ENCODE measurements at regions of chr13 and their contacts with region 1.

Region 1: DNA sequence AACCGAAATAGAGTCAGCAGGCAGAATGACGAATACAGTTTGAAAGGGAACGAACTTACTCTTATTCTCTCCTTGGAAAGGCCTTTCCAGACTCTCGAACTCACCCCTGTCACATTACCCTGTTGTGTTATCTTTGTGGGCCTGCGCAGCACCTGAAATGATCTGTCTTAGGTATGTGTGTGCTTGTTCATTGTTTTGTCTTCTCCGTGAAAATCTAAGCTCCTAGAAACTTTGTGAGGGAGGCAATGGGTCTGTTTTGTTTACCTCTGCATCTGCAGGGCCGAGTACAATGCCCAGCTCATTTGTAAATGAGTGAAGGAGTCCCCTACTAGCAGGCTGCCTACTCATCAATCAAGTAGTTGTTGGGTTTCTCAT is 19.6 kb downstream of the HMGB1 start:
- DNase-seq: no peak
- H3K4me3 ChIP-seq: peak overlapping the region; percentile 43
- H3K27ac ChIP-seq: peak overlapping the region in 1 of 2 donors; percentile 67
- H3K4me1 ChIP-seq: no peaks in the 10 kb centered on the region
- H3K27me3 ChIP-seq: no peaks in the 10 kb centered on the region
- CTCF ChIP-seq: no peak
- EP300 ChIP-seq: no peak
- POLR2A ChIP-seq: no peak

Region 2: GRCh38 chr13:28611654-28612131 is 1834.4 kb before region 1 on chr13:
- intact Hi-C with region 1: no loop called
- DNase-seq: no peak
- H3K4me3 ChIP-seq: no peak overlapping the region
- H3K27ac ChIP-seq: no peak overlapping the region
- H3K4me1 ChIP-seq: no peaks in the 10 kb centered on the region
- H3K27me3 ChIP-seq: no peaks in the 10 kb centered on the region
- CTCF ChIP-seq: no peak
- EP300 ChIP-seq: no peak
- POLR2A ChIP-seq: no peak

Region 3: DNA sequence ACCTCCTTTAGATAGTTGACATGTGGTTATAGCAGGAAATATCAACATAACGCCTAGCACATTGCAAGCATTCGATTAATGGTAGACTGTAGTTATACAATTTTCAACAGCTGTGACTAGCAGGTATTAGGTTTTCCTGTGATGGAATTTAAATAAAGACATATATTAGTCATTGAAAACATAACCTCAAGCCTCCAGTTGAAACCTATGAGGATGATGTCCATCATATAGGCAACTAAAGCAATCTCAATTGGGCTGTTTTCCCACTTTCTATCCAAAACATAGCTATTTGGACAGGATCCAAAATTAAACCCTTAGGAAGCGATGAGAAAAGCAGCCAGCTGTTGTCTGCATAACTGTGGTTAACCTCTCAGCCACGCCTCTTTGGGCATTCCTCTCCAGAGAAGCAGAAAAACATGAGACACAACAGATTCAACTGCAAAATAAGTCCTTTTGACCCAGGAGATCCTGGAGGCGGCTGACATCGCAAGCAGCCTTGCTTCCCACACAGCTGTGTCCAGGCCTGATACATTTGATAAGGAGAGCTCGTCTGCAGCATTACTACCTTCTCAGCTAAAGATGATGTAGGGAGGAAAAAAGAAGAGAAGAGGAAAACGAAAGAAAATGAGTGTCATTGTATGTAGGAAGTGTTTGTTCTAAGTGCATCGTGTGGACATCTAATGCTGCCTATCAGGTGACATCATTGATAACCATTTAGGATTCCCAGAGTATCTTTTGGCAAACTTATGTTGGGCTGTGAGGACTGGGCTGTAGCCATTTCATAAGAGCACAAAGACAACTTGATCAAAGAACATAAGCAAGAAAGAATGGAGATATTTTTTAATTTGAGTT is 543.8 kb before region 1 on chr13:
- intact Hi-C with region 1: no loop called
- DNase-seq: peak in 1 of 5 donors; percentile 46
- H3K4me3 ChIP-seq: no peak overlapping the region
- H3K27ac ChIP-seq: no peak overlapping the region
- H3K4me1 ChIP-seq: peaks cover 2% of the 10 kb centered on the region
- H3K27me3 ChIP-seq: no peaks in the 10 kb centered on the region
- CTCF ChIP-seq: no peak
- EP300 ChIP-seq: no peak
- POLR2A ChIP-seq: no peak

Region 4: DNA sequence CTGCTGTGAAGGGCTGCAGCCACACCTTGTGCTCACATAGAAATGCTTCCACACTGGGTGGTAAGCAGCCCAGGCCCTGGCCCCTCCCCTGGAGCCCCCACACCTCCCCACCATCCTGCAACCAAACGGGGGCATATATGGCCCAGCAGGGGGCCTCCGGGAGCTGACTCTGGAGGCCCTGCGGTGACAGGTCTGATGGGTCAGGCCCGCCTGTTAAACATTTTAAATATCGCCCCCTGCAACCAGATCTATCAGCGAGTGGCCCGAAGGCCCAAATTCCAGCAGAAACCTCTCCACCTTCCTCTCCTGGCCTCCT is 90.8 kb before region 1 on chr13:
- intact Hi-C with region 1: no loop called
- DNase-seq: no peak
- H3K4me3 ChIP-seq: no peak overlapping the region
- H3K27ac ChIP-seq: no peak overlapping the region
- H3K4me1 ChIP-seq: no peaks in the 10 kb centered on the region
- H3K27me3 ChIP-seq: no peaks in the 10 kb centered on the region
- CTCF ChIP-seq: no peak
- EP300 ChIP-seq: no peak
- POLR2A ChIP-seq: no peak

Region 5: GRCh38 chr13:30415430-30416030 is 30.6 kb before region 1 on chr13:
- intact Hi-C with region 1: loop called in 1 of 4 experiments (anchors 2 kb)
- DNase-seq: no peak
- H3K4me3 ChIP-seq: no peak overlapping the region
- H3K27ac ChIP-seq: no peak overlapping the region
- H3K4me1 ChIP-seq: no peaks in the 10 kb centered on the region
- H3K27me3 ChIP-seq: no peaks in the 10 kb centered on the region
- CTCF ChIP-seq: no peak
- EP300 ChIP-seq: no peak
- POLR2A ChIP-seq: no peak

Region 6: DNA sequence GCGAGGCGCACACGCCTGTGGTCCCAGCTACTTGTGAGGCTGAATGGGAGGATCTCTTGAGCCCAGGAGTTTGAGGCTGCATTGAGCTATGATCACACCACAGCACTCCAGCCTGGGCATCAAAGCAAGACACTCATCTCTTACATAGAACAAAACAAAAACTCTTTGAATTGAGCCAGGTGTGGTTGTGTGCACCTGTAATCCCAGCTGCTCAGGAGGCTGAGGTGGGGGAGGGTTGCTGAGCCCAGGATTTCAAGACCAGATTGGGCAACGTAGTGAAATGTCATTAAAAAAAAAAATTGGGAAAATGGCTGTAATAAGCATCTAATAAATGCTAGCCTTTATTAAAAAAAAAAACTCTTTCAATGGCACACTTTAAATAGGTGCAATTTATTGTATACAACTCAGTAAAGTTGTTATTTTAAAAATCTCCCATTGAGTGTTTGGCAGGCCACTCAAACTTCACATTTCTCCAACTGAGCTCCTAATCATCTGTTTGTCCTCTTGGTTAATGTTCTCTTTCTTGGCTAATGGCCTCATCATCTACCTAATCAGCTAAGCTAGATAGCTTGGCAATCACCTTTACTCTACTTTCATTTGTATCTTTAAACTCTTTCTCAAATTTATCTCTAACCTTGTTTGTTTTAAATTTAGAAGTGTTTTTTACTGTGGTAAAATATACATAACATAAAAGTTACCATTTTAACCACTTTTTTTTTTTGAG is 47.7 kb after region 1 on chr13:
- intact Hi-C with region 1: no loop called
- DNase-seq: no peak
- H3K4me3 ChIP-seq: no peak overlapping the region
- H3K27ac ChIP-seq: no peak overlapping the region
- H3K4me1 ChIP-seq: no peaks in the 10 kb centered on the region
- H3K27me3 ChIP-seq: no peaks in the 10 kb centered on the region
- CTCF ChIP-seq: no peak
- EP300 ChIP-seq: no peak
- POLR2A ChIP-seq: no peak

Measured in ovary (tissue), 10 donors.